GM12878 (cell line): ENCODE measurements at regions of chr13 and their contacts with region 1.

Region 1: GRCh38 chr13:41384755-41385503 is 72.4 kb upstream of the RGCC start:
- DNase-seq: no peak
- ATAC-seq: no peak
- H3K4me3 ChIP-seq: no peak overlapping the region
- H3K27ac ChIP-seq: no peak overlapping the region
- H3K4me1 ChIP-seq: no peaks in the 10 kb centered on the region
- H3K27me3 ChIP-seq: no peaks in the 10 kb centered on the region
- CTCF ChIP-seq: peak in 2 of 3 experiments; percentile 24 to 36; a peak in 2 of 6 replicates
- EP300 ChIP-seq: no peak
- POLR2A ChIP-seq: no peak
- RAD21 ChIP-seq: peak; percentile 39

Region 2: DNA sequence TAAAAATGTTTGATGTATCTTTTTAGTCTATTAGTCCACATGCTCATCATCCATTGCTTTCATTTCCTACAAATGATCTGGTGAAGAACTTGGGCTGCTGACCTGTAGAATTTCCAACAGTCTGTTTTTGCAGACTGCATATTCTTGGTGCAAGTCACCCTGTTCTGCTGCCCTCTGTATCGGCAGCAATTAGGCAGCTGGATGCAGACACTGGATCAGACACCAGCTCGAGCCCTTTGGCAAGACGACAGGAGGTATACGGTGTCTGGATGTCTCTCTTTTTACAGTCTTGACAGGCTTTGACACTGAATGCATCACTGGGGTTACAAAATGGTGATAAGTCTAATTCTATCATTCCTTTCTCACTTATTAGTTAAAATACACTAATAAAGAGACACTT is 143.3 kb before region 1 on chr13:
- CTCF ChIA-PET with region 1: no interaction called
- POLR2A ChIA-PET with region 1: no interaction called
- RAD21 ChIA-PET with region 1: no interaction called
- SMC1A ChIA-PET with region 1: no interaction called
- in situ Hi-C with region 1: no loop called
- intact Hi-C with region 1: no loop called
- DNase-seq: no peak
- ATAC-seq: no peak
- H3K4me3 ChIP-seq: no peak overlapping the region
- H3K27ac ChIP-seq: no peak overlapping the region
- H3K4me1 ChIP-seq: no peaks in the 10 kb centered on the region
- H3K27me3 ChIP-seq: no peaks in the 10 kb centered on the region
- CTCF ChIP-seq: no peak
- EP300 ChIP-seq: no peak
- POLR2A ChIP-seq: no peak
- RAD21 ChIP-seq: no peak

Region 3: GRCh38 chr13:41370736-41371135 is 14.2 kb before region 1 on chr13:
- CTCF ChIA-PET with region 1: interaction called, 14 read pairs
- POLR2A ChIA-PET with region 1: no interaction called
- RAD21 ChIA-PET with region 1: no interaction called
- SMC1A ChIA-PET with region 1: interaction called, 6 read pairs
- in situ Hi-C with region 1: no loop called
- intact Hi-C with region 1: no loop called
- DNase-seq: no peak
- ATAC-seq: no peak
- H3K4me3 ChIP-seq: no peak overlapping the region
- H3K27ac ChIP-seq: no peak overlapping the region
- H3K4me1 ChIP-seq: no peaks in the 10 kb centered on the region
- H3K27me3 ChIP-seq: no peaks in the 10 kb centered on the region
- CTCF ChIP-seq: no peak
- EP300 ChIP-seq: no peak
- POLR2A ChIP-seq: no peak
- RAD21 ChIP-seq: no peak